Stomach (tissue), 19 donors: ENCODE measurements at regions of chr2 and their contacts with region 1.

Region 1: GRCh38 chr2:42095923-42096408 is 48.1 kb downstream of the PKDCC start:
- DNase-seq: peak; percentile 90 to 92
- H3K4me3 ChIP-seq: no peak overlapping the region
- H3K27ac ChIP-seq: peak overlapping the region in 1 of 5 donors; percentile 23
- H3K4me1 ChIP-seq: peaks cover 19 to 86% (median 34%) of the 10 kb centered on the region in 4 donors
- H3K27me3 ChIP-seq: no peaks in the 10 kb centered on the region
- CTCF ChIP-seq: peak in 5 of 7 experiments; percentile 71 to 93 (median 79)
- EP300 ChIP-seq: no peak
- POLR2A ChIP-seq: no peak

Region 2: GRCh38 chr2:41937464-41937906 is 158.5 kb before region 1 on chr2:
- intact Hi-C with region 1: no loop called
- DNase-seq: no peak
- H3K4me3 ChIP-seq: no peak overlapping the region
- H3K27ac ChIP-seq: peak overlapping the region in 1 of 5 donors; percentile 11
- H3K4me1 ChIP-seq: peaks cover 0 to 40% (median 19%) of the 10 kb centered on the region in 4 donors
- H3K27me3 ChIP-seq: no peaks in the 10 kb centered on the region
- CTCF ChIP-seq: no peak
- EP300 ChIP-seq: no peak
- POLR2A ChIP-seq: no peak

Region 3: DNA sequence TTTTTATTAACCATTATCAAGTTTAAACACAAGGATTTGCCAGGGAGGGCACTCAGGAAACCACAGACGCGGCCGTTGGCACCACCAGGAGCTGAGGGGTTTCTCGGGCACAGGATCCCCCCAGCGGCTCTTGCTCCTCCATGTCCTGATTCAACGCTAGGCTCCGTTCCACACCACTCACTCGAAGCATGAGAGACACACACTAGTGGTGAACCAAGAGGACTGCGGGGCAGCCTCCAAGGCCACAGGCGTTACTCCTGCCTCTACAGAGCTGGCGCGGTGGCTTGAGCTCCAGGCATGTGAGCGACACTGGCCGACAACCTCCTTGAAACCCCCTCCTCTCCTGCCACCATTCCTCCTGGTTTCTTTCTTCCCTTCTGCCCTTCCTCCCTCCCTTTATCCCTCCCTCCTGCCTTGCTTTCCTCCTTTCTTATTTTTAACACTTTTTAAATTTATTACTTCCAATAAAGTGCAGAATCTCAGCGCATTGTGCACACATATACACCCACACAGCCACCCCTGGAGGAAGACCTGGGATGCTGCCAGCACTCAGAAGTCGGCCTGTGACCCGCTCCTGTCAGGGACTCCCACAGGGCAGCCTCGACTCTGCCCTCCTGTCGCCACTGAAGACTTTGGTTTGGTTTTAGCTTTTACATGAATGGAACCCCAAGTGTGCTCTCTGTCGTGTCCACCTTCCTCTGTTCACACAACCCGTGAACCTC is 243.4 kb after region 1 on chr2:
- intact Hi-C with region 1: loop called (anchors 10 kb)
- DNase-seq: peak in 1 of 2 donors; percentile 31
- H3K4me3 ChIP-seq: no peak overlapping the region
- H3K27ac ChIP-seq: no peak overlapping the region
- H3K4me1 ChIP-seq: peaks cover 8 to 26% (median 19%) of the 10 kb centered on the region in 4 donors
- H3K27me3 ChIP-seq: no peaks in the 10 kb centered on the region
- CTCF ChIP-seq: no peak
- EP300 ChIP-seq: no peak
- POLR2A ChIP-seq: no peak

Region 4: DNA sequence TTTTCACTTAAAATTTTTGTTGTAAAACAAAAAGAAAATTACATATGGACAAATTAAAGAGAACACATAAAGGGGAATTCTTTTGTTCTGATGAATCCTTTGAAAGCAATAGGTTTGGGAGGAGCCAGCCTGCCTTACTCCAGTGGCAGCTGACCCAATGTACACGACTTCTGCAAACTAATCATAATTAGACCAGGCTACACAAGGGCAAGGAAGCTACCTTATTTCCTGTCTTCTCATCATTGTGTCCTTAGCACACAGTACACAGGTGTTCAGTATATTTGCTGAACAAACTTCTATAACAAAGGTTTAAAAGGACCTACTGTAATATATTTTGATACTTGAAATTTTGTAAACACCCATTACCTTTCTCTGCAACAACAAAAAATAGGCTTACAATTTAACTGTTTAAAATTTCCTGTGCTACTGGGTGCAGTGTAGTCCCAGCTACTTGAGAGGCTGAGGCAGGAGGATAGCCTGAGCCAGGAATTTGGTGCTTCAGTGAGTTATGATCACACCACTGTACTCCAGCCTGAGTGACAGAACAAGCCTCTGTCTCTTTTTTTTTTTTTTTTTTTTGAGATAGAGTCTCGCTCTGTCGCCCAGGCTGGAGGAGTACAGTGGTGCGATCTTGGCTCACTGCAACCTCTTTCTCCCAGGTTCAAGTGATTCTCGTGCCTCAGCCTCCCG is 378.9 kb after region 1 on chr2:
- intact Hi-C with region 1: no loop called
- DNase-seq: no peak
- H3K4me3 ChIP-seq: no peak overlapping the region
- H3K27ac ChIP-seq: no peak overlapping the region
- H3K4me1 ChIP-seq: no peaks in the 10 kb centered on the region
- H3K27me3 ChIP-seq: no peaks in the 10 kb centered on the region
- CTCF ChIP-seq: no peak
- EP300 ChIP-seq: no peak
- POLR2A ChIP-seq: no peak